ENCODE measurements at regions of chr2 and their contacts with region 1.

Region 1: DNA sequence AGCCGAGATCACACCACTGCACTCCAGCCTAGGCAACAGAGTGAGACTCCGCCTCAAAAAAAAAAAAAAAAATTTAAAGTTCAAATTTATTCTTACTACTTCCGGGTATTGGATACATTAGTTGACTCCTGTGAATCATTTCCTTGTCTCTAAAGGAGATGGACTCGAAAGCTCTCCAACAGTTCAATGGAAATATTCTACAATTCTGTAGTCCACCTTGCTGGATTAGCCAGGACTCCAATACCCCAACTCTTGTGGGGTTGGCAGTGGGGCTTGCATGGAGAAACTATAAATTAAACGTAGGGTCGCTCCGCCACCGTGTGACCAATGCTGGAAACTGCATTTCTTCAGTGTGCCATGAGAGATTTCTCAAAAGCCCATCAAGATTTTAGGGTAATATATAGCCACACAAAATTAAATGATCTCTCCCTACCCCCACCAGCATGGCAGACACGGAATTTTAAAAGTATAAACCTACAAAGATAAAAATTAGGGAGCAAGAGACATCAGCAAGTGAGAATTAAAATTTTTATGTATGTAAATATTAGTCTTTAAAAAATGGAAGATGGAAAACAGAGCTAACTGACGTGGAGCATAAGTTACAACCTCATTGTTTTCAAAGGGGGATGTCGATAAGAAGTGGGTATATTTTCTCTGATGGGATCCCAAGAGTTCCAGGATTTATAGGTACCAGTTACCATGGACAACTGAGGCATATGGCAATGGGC is 27.8 kb upstream of the GAREM2 start:
- DNase-seq: peak; percentile 64
- H3K4me3 ChIP-seq: no peak overlapping the region
- H3K27ac ChIP-seq: peak overlapping the region; percentile 50 to 79 (median 71)
- H3K4me1 ChIP-seq: peaks cover 0 to 21% (median 7%) of the 10 kb centered on the region in 4 donors
- H3K27me3 ChIP-seq: peaks cover 16% of the 10 kb centered on the region
- CTCF ChIP-seq: peak; percentile 62 to 88 (median 71)
- EP300 ChIP-seq: no peak
- POLR2A ChIP-seq: no peak

Region 2: GRCh38 chr2:25951071-25951547 is 194.0 kb before region 1 on chr2:
- in situ Hi-C with region 1: loop called in 1 of 4 experiments (anchors 5 kb)
- intact Hi-C with region 1: loop called (anchors 2 kb)
- DNase-seq: peak; percentile 84
- H3K4me3 ChIP-seq: no peak overlapping the region
- H3K27ac ChIP-seq: no peak overlapping the region
- H3K4me1 ChIP-seq: no peaks in the 10 kb centered on the region
- H3K27me3 ChIP-seq: no peaks in the 10 kb centered on the region
- CTCF ChIP-seq: peak; percentile 89 to 96 (median 91)
- EP300 ChIP-seq: no peak
- POLR2A ChIP-seq: no peak

Region 3: DNA sequence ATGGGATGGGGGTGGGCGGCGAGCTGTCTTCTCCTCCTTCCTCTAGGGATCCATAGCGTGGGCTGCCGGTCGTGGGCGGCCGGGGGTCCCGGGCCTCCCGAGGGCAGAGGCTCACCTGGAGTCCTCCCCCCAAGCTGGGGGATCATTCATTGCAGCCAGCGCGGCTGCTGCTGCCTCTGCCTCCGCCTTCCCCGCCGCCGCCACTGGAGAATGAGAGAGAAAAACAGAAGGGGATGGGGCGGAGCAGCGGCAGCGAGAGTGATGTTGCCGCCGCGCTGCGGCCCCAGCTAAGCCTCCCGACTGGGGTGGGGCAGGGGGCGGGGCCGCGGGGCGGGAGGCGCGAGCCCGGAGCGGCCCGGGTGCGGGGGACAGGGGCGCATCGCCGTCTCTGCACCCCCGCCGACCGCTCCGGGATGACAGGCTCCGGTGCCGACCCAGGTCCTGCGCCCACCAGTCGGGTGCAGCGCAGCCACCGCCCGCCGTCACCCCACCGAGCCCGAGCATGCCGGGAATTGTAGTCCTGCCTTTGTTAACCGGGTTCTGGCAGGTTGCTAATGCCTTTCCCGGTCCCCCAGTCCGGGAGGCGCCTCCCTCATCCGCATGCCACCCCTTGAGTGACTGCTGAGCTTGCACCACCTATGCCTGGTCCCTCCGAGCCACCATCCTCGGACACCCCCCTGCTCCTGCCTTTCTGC is 162.7 kb before region 1 on chr2 and contains the start of gene KIF3C:
- in situ Hi-C with region 1: loop called in 1 of 4 experiments (anchors 5 kb)
- intact Hi-C with region 1: loop called (anchors 10 kb)
- DNase-seq: peak; percentile 66
- H3K4me3 ChIP-seq: peak within 1 kb of the TSS; percentile 37 to 84 (median 62)
- H3K27ac ChIP-seq: peak within 1 kb of the TSS; percentile 64 to 80 (median 70)
- H3K4me1 ChIP-seq: peaks cover 5 to 15% (median 10%) of the 10 kb centered on the region in 4 donors
- H3K27me3 ChIP-seq: no peaks in the 10 kb centered on the region
- CTCF ChIP-seq: no peak
- EP300 ChIP-seq: no peak
- POLR2A ChIP-seq: no peak
- total RNA-seq, gene KIF3C: 0.37 to 3.2 (median 2.0) TPM

Region 4: DNA sequence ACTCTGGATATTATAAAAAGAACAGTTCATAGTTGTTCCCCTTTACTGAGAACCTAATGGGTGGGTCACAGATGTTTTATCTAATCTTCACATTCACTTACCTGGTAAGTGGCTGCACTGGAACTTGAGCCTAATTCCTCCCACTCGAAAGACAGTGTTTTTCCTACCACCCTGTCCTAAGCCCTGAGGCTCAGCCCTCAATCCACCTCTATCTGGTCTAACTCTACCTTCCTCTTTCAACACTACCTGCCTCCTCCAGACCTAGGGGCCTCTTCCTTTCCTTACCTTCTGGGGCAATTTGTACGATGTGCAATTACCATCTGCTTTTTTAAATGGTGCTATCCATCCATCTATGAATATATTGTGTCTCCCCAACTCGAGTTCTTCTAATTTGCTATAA is 153.2 kb before region 1 on chr2:
- in situ Hi-C with region 1: loop called in 3 of 4 experiments (anchors 5 to 10 kb)
- intact Hi-C with region 1: loop called (anchors 10 kb)
- DNase-seq: no peak
- H3K4me3 ChIP-seq: peak overlapping the region in 1 of 4 donors; percentile 44
- H3K27ac ChIP-seq: peak overlapping the region in 3 of 4 donors; percentile 14 to 63 (median 38)
- H3K4me1 ChIP-seq: peaks cover 0 to 11% (median 8%) of the 10 kb centered on the region in 4 donors
- H3K27me3 ChIP-seq: no peaks in the 10 kb centered on the region
- CTCF ChIP-seq: no peak
- EP300 ChIP-seq: no peak
- POLR2A ChIP-seq: no peak

Region 5: DNA sequence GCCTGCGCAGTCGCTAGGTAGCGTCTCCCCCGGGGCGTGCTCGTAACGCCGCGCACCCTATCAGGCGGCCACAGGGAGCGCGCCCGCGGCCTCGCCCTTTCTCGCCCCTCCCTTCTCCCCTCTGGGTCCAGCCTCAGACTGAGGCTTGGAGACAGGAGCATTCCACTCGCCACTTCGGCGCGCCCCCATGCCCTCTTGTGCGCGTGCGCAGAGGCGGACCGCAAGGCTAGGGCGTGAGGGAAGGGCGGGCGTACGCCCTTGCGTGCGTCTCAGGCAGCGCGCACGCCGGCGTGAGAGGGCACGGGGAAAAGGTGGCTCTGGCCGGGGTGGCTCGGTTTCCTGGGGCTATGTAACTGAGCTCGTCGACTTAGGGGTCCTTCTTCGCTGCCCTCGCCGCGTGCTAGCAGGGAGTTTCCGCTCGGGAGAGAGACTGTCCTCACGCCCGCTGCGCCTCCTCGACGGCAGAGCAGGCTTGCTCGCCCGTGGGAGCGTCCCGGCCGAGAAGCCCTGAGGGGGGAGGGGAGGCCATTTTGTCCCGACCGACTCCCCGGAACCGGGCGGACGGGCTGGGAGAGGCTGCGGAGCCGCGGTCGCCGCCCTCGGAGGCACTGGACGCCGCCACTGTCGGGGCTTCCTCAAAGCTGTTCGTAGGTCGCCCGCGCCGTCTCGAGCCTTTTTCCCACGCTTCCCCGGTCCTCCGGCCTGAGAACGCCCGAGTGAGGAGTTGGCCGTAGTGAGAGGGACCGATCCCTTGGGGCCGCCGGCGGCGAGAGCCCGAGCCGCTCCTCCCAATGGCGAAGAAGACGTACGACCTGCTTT is 111.1 kb before region 1 on chr2 and contains the start of gene RAB10:
- in situ Hi-C with region 1: no loop called
- intact Hi-C with region 1: no loop called
- DNase-seq: peak; percentile 100
- H3K4me3 ChIP-seq: peak within 1 kb of the TSS; percentile 81 to 93 (median 85)
- H3K27ac ChIP-seq: peak within 1 kb of the TSS; percentile 93 to 99 (median 96)
- H3K4me1 ChIP-seq: peaks cover 7 to 40% (median 27%) of the 10 kb centered on the region in 4 donors
- H3K27me3 ChIP-seq: no peaks in the 10 kb centered on the region
- CTCF ChIP-seq: peak in 4 of 5 experiments; percentile 7 to 28 (median 16)
- EP300 ChIP-seq: no peak
- POLR2A ChIP-seq: peak; percentile 99
- total RNA-seq, gene RAB10: 99.5 to 150 (median 144) TPM